Dorsolateral prefrontal cortex (tissue), 120 donors: ENCODE measurements at regions of chrX and their contacts with region 1.

Region 1: DNA sequence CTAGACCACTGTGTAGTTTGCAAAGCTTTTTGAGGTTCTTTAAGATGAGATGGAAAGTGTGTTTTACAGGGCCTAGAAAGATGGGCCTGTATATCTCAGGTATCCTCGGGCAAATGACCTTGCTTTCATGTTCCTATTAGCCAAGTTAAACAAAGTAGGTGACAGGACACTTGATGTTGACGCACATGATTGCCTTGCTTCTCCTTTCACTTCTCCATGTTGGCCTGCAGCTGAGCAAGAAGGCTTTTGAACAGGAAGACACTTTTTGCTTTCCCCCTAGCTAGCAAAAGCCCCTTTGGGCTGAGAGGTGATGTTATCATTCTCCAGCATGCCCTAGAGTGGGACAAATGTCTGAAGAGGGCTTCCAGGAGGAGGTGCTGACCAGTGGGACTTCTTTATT is 202.1 kb downstream of the GPC3 start:
- DNase-seq: no peak
- H3K4me3 ChIP-seq: no peak overlapping the region
- H3K27ac ChIP-seq: no peak overlapping the region
- H3K27me3 ChIP-seq: peaks cover 0 to 75% (median 18%) of the 10 kb centered on the region in 45 donors
- CTCF ChIP-seq: no peak

Region 2: GRCh38 chrX:134396174-134396573 is 612.9 kb after region 1 on chrX:
- intact Hi-C with region 1: loop called in 1 of 2 experiments (anchors 10 kb)
- DNase-seq: no peak
- H3K4me3 ChIP-seq: no peak overlapping the region
- H3K27ac ChIP-seq: no peak overlapping the region
- H3K27me3 ChIP-seq: peaks cover 0 to 54% (median 8%) of the 10 kb centered on the region in 45 donors
- CTCF ChIP-seq: peak; percentile 34 to 83 (median 70)